ENCODE measurements at regions of chr11 and their contacts with region 1.

Region 1: GRCh38 chr11:9703280-9703679 is 39.4 kb downstream of the SWAP70 start:
- DNase-seq: no peak
- ATAC-seq: no peak
- H3K4me3 ChIP-seq: no peak overlapping the region
- H3K27ac ChIP-seq: 0 out of 2 replicates have a peak overlapping the region, but pooled peaks have one; percentile 27
- H3K4me1 ChIP-seq: peaks cover 23% of the 10 kb centered on the region
- H3K27me3 ChIP-seq: no peaks in the 10 kb centered on the region
- CTCF ChIP-seq: no peak

Region 2: DNA sequence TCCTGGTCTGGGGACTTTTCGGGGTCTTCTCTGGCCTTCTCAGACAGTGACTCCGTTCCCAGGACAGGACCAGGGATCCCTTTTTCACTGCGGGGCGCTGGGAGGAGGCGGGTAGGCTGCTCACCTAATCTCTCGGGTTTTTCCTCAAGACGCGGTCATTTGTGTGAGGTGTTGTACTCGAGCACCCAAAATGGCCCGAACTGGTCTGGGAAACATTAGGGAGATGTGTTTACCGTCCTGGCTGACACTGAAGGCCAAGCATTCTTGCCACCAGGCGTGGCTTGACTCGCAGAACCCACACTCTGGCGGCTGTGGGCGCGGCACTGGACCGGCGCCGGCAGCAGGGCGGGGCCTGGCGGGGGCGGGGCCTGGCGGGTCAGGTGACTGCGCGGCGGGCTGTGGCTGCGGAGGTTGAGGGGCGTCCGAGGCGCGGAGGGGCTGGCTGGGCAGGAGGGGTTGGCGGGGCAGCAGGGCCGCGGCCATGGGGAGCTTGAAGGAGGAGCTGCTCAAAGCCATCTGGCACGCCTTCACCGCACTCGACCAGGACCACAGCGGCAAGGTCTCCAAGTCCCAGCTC is 39.5 kb before region 1 on chr11 and contains the start of gene SWAP70:
- CTCF ChIA-PET with region 1: no interaction called
- POLR2A ChIA-PET with region 1: no interaction called
- intact Hi-C with region 1: loop called (anchors 5 kb)
- DNase-seq: peak; percentile 84
- ATAC-seq: peak; percentile 93
- H3K4me3 ChIP-seq: peak within 1 kb of the TSS; percentile 96
- H3K27ac ChIP-seq: peak within 1 kb of the TSS; percentile 51
- H3K4me1 ChIP-seq: peaks cover 15% of the 10 kb centered on the region
- H3K27me3 ChIP-seq: no peaks in the 10 kb centered on the region
- CTCF ChIP-seq: 0 out of 2 replicates have a peak, but pooled peaks have one; percentile 16
- total RNA-seq, gene SWAP70: 8.6 and 8.8 TPM in 2 replicates